T-cell (primary cell): ENCODE measurements at regions of chr12 and their contacts with region 1.

Region 1: GRCh38 chr12:57498132-57498502 is 10.2 kb downstream of the MARS1 start:
- DNase-seq: no peak
- ATAC-seq: no peak
- H3K4me3 ChIP-seq: no peak overlapping the region
- H3K4me3 Mint-ChIP-seq: no peak overlapping the region
- H3K27ac ChIP-seq: no peak overlapping the region
- H3K27ac Mint-ChIP-seq: no peak overlapping the region
- H3K4me1 ChIP-seq: no peaks in the 10 kb centered on the region
- H3K4me1 Mint-ChIP-seq: peaks cover 0 to 11% (median 2%) of the 10 kb centered on the region in 3 donors
- H3K27me3 ChIP-seq: no peaks in the 10 kb centered on the region
- H3K27me3 Mint-ChIP-seq: no peaks in the 10 kb centered on the region

Region 2: GRCh38 chr12:57511161-57511560 is 13.0 kb after region 1 on chr12:
- CTCF ChIA-PET with region 1: no interaction called
- POLR2A ChIA-PET with region 1: interaction called in 1 of 2 experiments, 17 read pairs
- DNase-seq: no peak
- ATAC-seq: no peak
- H3K4me3 ChIP-seq: no peak overlapping the region
- H3K4me3 Mint-ChIP-seq: no peak overlapping the region
- H3K27ac ChIP-seq: no peak overlapping the region
- H3K27ac Mint-ChIP-seq: peak overlapping the region in 1 of 2 donors; percentile 34
- H3K4me1 ChIP-seq: no peaks in the 10 kb centered on the region
- H3K4me1 Mint-ChIP-seq: no peaks in the 10 kb centered on the region
- H3K27me3 ChIP-seq: no peaks in the 10 kb centered on the region
- H3K27me3 Mint-ChIP-seq: no peaks in the 10 kb centered on the region